ENCODE measurements at regions of chr7 and their contacts with region 1.

Region 1: DNA sequence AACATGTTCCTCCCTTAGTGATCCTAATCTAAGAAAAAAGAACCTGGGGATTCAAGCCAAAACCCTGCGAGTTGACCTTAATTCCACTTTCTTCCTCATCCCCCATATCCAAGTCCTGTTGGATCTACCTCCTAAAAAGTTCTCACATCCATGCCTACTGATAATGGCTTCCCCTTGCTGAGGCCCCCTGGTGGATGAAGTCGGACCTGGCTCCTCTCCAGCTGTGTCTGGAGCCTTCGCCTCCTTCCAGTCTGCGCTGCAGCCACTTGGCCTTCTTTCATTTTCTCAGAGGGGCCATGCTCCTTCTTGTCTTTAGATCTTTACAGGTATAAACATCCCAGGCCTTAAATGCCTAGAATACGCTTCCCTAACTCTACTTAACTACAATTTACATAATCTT is 8.1 kb downstream of the PDE1C start:
- DNase-seq: peak; percentile 30
- ATAC-seq: no peak
- H3K4me3 ChIP-seq: no peak overlapping the region
- H3K27ac ChIP-seq: no peak overlapping the region
- H3K4me1 ChIP-seq: peaks cover 10% of the 10 kb centered on the region
- H3K27me3 ChIP-seq: no peaks in the 10 kb centered on the region
- CTCF ChIP-seq: peak; percentile 42
- POLR2A ChIP-seq: no peak
- RAD21 ChIP-seq: peak; percentile 39; the same call in 1 of the 2 replicates

Region 2: DNA sequence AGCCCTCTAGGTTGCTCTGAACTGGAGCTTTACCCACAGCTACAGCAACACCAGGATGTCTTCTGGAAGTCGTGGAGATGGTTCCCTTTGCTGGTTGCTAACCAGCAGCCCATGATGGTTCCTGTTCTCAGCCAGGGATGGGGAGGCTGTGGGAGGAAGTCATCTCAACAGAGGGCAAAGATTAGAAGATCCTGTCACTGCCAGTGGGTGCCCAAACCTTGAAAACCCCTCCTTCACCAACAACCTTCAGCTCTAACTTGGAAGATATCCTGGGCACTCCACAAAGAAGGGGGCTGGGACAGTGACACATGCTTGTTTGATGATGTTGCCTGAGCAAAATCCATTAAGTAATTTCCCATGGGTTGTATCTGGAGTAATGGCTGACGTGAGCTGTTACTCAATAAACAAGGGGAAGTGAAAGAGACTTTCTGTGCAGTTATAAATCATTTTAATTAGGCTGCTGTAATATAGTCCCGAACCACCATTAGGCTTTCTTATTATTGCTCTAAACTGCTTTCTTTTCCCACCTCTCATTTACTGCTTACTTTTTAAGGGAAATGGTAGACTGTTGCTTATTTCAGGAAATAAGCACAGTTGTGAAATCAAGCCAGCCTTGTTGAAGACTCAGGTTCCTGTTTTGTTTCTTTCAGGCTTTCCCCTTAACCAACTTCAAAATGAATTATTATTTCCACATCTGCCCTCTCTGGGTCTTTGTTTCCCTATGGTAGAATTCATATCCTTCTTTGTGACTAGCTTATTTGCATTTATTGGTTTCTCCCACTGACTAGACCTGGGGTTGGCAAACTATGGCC is 250.3 kb before region 1 on chr7:
- CTCF ChIA-PET with region 1: no interaction called
- POLR2A ChIA-PET with region 1: no interaction called
- dilution Hi-C with region 1: no loop called
- in situ Hi-C with region 1: no loop called
- intact Hi-C with region 1: loop called (anchors 10 kb)
- DNase-seq: peak; percentile 75
- ATAC-seq: peak; percentile 66
- H3K4me3 ChIP-seq: no peak overlapping the region
- H3K27ac ChIP-seq: peak overlapping the region; percentile 74
- H3K4me1 ChIP-seq: peaks cover 11% of the 10 kb centered on the region; the same call in 1 of the 2 replicates
- H3K27me3 ChIP-seq: no peaks in the 10 kb centered on the region
- CTCF ChIP-seq: no peak
- POLR2A ChIP-seq: no peak
- RAD21 ChIP-seq: no peak